Posterior vena cava (tissue), 2 donors: ENCODE measurements at regions of chr16 and their contacts with region 1.

Region 1: GRCh38 chr16:17683281-17683680 is 212.5 kb upstream of the XYLT1 start:
- DNase-seq: no peak

Region 2: GRCh38 chr16:18003033-18003432 is 319.8 kb after region 1 on chr16:
- intact Hi-C with region 1: loop called in 1 of 2 experiments (anchors 5 kb)
- DNase-seq: no peak